Transverse colon (tissue), 4 donors: ENCODE measurements at regions of chr17 and their contacts with region 1.

Region 1: DNA sequence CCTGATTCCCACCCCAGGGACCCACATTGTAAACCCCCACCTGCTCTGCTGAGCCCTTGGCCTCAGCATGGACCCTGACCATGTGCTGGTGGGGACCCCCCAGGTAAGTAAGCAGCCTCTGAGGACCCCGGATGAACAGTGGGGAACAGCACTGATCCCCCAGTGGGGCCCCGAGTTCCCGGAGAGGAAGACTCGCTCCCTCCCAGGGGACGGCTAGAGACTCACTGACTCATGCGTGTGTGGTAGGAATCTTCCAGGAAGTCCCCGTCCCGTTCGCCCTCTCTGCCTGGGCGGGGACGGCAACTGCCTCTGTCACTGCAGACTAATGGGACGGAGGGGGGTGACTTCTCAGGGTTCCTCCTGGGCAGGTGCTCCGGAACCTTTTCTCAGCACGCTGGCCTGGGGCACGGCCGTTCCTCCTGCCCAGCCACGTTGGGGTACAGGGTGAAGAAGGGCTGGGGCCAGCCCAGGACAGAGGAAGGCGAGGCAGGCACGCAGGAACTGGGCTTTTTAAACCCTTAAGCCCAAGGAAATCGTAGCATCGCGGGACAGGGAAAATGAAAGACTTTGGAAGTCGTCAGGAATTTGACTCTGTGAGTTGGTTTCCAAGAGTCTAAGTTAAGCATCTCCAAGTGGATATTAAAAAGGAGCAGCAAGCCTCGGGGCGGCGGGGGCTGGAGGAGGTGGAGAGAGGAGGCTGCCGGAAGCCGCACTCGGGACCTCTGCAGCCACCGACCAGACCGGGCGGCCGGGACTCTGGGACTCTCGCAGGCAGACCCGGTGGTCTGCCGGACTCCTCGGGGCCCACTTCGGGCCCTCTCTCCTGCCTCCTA is 178.7 kb downstream of the SEC14L1 start:
- DNase-seq: peak; percentile 94
- H3K4me3 ChIP-seq: peak overlapping the region; percentile 12 to 51 (median 37)
- H3K27ac ChIP-seq: peak overlapping the region; percentile 87 to 91 (median 90)
- H3K4me1 ChIP-seq: peaks cover 32 to 70% (median 57%) of the 10 kb centered on the region in 4 donors
- H3K27me3 ChIP-seq: no peaks in the 10 kb centered on the region
- CTCF ChIP-seq: peak in 1 of 5 experiments; percentile 16
- EP300 ChIP-seq: no peak
- POLR2A ChIP-seq: peak; percentile 88

Region 2: DNA sequence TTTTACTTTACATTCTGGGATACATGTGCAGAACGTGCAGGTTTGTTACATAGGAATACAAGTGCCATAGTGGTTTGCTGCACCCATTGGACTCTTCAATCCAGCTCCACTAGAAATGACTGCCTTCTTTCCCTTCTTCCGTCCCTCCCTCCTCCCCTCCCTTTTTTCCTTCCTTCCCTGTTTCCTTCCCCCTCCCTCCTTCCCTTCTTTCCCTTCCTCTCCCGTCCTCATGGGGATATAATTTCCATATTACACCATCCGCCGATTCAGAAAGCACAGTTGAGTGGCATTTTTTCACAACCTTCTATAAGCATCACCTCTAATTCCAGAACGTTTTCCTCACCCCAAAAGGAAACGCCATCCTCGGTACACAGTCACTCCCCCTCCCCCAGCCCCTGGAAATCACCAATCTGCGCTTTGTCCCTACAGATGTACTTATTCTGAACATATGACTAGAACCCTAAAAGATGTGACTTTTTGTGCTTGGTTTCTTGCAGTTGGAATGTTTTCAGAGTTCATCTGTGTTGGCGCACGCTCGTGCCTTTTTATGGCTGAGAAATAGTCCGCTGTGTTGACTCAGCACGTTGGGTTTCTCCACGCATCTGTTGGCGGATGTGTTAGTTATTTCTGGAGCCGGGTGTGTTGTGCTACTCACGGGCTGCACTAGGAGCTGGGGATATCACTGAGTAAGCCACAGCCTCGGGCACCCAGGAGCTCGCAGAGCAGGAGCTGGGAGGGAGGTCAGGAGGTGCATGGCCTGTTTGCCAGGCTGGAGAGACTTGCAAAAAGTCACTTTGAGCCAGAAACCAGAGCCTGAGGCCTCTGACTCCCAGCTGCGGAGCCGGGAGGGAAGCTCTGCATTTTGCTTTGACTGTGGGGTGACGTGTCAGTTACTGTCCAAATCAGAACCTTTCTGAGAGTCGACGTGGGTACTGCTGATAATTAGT is 157.8 kb after region 1 on chr17:
- in situ Hi-C with region 1: no loop called
- intact Hi-C with region 1: loop called (anchors 5 kb)
- DNase-seq: peak; percentile 65
- H3K4me3 ChIP-seq: no peak overlapping the region
- H3K27ac ChIP-seq: peak overlapping the region; percentile 69 to 87 (median 81)
- H3K4me1 ChIP-seq: peaks cover 65 to 91% (median 76%) of the 10 kb centered on the region in 4 donors
- H3K27me3 ChIP-seq: no peaks in the 10 kb centered on the region
- CTCF ChIP-seq: peak in 1 of 5 experiments; percentile 12
- EP300 ChIP-seq: peak; percentile 5
- POLR2A ChIP-seq: no peak

Region 3: DNA sequence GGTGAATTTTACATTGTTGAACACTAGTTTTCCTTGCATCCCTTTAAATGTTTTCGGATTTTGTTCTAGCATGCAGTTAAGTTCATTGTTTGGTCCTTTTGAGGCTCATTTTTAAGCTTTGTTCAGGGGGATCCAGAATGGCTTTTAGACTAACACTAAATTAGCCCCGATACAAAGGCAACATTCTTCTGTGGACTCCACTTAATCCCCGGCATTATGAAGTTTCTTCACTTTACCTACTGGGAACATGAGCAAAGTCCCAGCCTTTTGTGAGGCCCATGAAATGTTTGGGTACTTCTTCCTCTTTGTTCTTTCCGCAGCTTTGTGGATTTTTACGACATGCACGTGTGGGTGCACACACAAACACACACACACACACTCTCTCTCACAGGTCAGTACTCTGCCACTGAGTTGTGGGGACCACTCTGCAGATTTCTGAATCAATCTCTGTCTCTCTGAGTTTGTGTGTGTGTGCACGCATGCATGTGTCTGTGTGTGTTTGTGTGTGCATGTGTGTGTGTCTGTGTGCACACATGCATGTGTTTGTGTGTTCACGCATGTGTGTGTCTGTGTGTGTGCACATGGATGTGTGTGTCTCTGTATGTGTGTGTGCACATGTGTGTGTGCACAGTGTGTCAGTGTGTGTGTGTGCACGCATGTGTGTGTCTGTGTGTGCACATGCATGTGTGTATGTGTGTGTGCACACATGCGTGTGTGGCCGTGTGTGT is 398.7 kb after region 1 on chr17:
- in situ Hi-C with region 1: no loop called
- intact Hi-C with region 1: no loop called
- DNase-seq: no peak
- H3K4me3 ChIP-seq: no peak overlapping the region
- H3K27ac ChIP-seq: no peak overlapping the region
- H3K4me1 ChIP-seq: no peaks in the 10 kb centered on the region
- H3K27me3 ChIP-seq: peaks cover 12% of the 10 kb centered on the region
- CTCF ChIP-seq: no peak
- EP300 ChIP-seq: no peak
- POLR2A ChIP-seq: no peak